ENCODE measurements at regions of chr4 and their contacts with region 1.

Region 1: GRCh38 chr4:182925298-182925738 is 8.1 kb upstream of the DCTD start:
- DNase-seq: peak; percentile 78 to 84
- H3K4me3 ChIP-seq: no peak overlapping the region
- H3K4me3 Mint-ChIP-seq: no peak overlapping the region
- H3K27ac Mint-ChIP-seq: no peak overlapping the region
- H3K4me1 ChIP-seq: 0 out of 2 replicates have a peak, but pooled peaks cover 7% of the 10 kb centered on the region
- H3K4me1 Mint-ChIP-seq: no peaks in the 10 kb centered on the region
- H3K27me3 ChIP-seq: no peaks in the 10 kb centered on the region
- H3K27me3 Mint-ChIP-seq: no peaks in the 10 kb centered on the region
- CTCF ChIP-seq: peak; percentile 80 to 87

Region 2: DNA sequence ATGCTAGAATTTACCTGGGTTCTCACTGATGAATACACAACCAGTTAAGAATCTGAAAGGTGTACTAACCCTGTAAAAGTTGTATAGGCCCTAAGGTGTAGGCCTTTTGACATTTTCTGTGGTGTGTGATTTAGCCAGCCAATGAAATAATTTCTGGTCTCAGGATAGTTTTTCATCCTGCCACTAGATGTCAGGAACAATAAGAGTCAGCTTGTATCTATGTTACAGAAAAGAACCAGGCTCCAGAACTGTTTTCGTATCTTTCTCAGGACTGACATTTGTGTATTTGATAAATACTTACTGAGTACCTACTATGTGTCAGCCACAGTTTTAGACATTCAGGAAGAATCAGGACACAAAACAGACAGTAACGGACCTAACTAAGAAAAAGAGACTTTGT is 1355.8 kb before region 1 on chr4:
- CTCF ChIA-PET with region 1: no interaction called
- POLR2A ChIA-PET with region 1: no interaction called
- intact Hi-C with region 1: loop called (anchors 10 kb)
- DNase-seq: peak in 1 of 2 experiments; percentile 4
- H3K4me3 ChIP-seq: no peak overlapping the region
- H3K4me3 Mint-ChIP-seq: no peak overlapping the region
- H3K27ac Mint-ChIP-seq: no peak overlapping the region
- H3K4me1 ChIP-seq: no peaks in the 10 kb centered on the region
- H3K4me1 Mint-ChIP-seq: no peaks in the 10 kb centered on the region
- H3K27me3 ChIP-seq: no peaks in the 10 kb centered on the region
- H3K27me3 Mint-ChIP-seq: peaks cover 11% of the 10 kb centered on the region
- CTCF ChIP-seq: peak in 1 of 2 experiments; percentile 48

Region 3: GRCh38 chr4:182478475-182478874 is 446.8 kb before region 1 on chr4:
- CTCF ChIA-PET with region 1: no interaction called
- POLR2A ChIA-PET with region 1: no interaction called
- intact Hi-C with region 1: loop called (anchors 10 kb)
- DNase-seq: peak in 1 of 2 experiments; percentile 30
- H3K4me3 ChIP-seq: no peak overlapping the region
- H3K4me3 Mint-ChIP-seq: no peak overlapping the region
- H3K27ac Mint-ChIP-seq: no peak overlapping the region
- H3K4me1 ChIP-seq: no peaks in the 10 kb centered on the region
- H3K4me1 Mint-ChIP-seq: no peaks in the 10 kb centered on the region
- H3K27me3 ChIP-seq: no peaks in the 10 kb centered on the region
- H3K27me3 Mint-ChIP-seq: no peaks in the 10 kb centered on the region
- CTCF ChIP-seq: peak; percentile 46 to 67

Region 4: GRCh38 chr4:182806259-182807252 is 118.8 kb before region 1 on chr4:
- CTCF ChIA-PET with region 1: no interaction called
- POLR2A ChIA-PET with region 1: no interaction called
- intact Hi-C with region 1: loop called (anchors 10 kb)
- DNase-seq: peak; percentile 67 to 84
- H3K4me3 ChIP-seq: peak overlapping the region; percentile 42
- H3K4me3 Mint-ChIP-seq: peak overlapping the region; percentile 77
- H3K27ac Mint-ChIP-seq: peak overlapping the region; percentile 31
- H3K4me1 ChIP-seq: no peaks in the 10 kb centered on the region
- H3K4me1 Mint-ChIP-seq: no peaks in the 10 kb centered on the region
- H3K27me3 ChIP-seq: no peaks in the 10 kb centered on the region
- H3K27me3 Mint-ChIP-seq: no peaks in the 10 kb centered on the region
- CTCF ChIP-seq: peak; percentile 87 to 96

Region 5: DNA sequence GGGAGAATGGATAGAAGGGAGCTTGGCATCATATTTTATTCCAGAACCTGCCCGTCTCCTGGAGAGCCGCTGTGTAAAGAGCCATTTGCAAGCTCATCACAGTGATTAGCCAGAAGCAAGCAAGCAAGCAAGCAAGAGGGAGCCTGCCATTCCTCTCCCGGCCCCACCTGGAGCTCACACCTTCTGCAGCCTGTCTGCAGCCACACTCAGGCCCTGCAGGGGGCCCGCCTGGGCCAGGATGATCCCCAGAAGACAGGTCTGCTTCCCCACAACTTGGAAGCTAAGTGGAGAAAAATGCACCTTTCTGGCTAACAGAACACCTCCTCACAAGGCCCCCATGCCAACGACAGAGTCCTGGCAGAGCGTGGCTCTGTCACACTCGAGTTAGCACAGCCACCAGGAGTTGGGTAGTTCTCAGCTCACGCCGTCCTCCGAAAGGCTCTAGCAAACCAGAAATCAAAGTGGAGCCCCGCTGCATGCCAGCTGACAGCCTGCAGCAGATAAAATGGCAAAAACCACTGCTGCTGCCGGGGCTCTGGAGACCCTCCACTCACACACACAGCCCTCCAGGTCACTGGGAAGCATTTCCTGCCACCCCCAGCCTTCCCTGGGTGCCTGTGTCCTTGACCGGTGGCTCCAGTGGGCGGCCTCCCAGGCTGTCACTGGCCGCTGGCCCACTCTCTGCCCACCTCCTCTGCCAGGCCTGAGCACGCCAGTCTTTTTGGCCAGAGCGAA is 63.0 kb before region 1 on chr4:
- CTCF ChIA-PET with region 1: interaction called, 7 read pairs
- POLR2A ChIA-PET with region 1: no interaction called
- intact Hi-C with region 1: loop called (anchors 2 kb)
- DNase-seq: peak in 1 of 2 experiments; percentile 34
- H3K4me3 ChIP-seq: no peak overlapping the region
- H3K4me3 Mint-ChIP-seq: no peak overlapping the region
- H3K27ac Mint-ChIP-seq: no peak overlapping the region
- H3K4me1 ChIP-seq: no peaks in the 10 kb centered on the region
- H3K4me1 Mint-ChIP-seq: no peaks in the 10 kb centered on the region
- H3K27me3 ChIP-seq: no peaks in the 10 kb centered on the region
- H3K27me3 Mint-ChIP-seq: peaks cover 3% of the 10 kb centered on the region
- CTCF ChIP-seq: peak; percentile 22 to 45

Measured in Caco-2 (cell line).